HepG2 (cell line): ENCODE measurements at regions of chr2 and their contacts with region 1.

Region 1: DNA sequence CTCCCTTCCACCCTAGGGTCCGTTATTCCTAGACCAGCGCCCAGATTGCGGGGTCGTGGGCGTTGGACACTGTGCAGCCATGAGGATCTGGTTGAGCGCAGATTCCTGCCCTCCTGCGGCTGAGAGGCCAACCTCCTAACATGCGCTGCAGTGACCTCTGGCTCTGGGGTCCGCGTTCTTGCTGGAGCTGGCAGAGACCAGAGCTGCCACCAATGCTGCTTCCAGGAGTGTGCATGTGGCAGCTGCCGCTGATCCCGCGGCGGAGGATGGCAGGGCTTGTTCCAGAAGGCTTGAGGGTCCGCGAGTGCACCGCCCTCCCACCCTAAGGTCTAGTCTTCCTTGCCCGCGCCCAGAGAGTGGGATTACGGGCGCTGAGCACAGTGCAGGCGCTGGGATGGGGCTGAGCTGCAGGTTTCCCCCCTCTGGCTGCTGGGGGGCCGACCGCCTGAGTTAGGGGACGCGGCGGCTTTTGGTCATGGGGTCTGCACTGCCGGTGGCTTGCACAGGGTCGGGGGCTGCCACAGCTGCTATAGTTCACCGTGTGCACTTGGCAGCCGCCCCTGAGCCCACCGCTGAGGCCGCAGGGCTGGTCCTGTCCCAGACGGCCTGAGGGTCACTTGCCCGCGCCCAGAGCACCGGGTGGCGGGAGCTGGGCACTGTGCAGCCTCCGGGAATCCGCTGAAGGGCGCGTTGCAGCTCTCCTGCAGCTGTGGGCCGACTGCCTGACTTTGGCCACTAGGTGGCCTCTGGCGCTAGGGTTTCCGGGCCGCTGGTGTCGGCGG is 145.9 kb downstream of the CCDC74A start:
- DNase-seq: peak; percentile 71
- ATAC-seq: peak; percentile 96
- H3K4me3 ChIP-seq: peak overlapping the region; percentile 53 to 72 (median 56)
- H3K27ac ChIP-seq: no peak overlapping the region
- H3K4me1 ChIP-seq: peaks cover 20% of the 10 kb centered on the region
- H3K27me3 ChIP-seq: peaks cover 0 to 8% of the 10 kb centered on the region in 2 experiments; a peak in 2 of 5 replicates
- CTCF ChIP-seq: peak; percentile 98
- EP300 ChIP-seq: 0 out of 4 replicates have a peak, but pooled peaks of 1 of the 2 experiments have one; percentile 27
- POLR2A ChIP-seq: no peak
- RAD21 ChIP-seq: peak; percentile 95

Region 2: GRCh38 chr2:131154071-131154531 is 519.5 kb before region 1 on chr2:
- CTCF ChIA-PET with region 1: interaction called, 6 read pairs
- POLR2A ChIA-PET with region 1: interaction called, 4 read pairs
- in situ Hi-C with region 1: loop called (anchors 25 kb)
- intact Hi-C with region 1: loop called (anchors 1 kb)
- DNase-seq: peak; percentile 70
- ATAC-seq: peak; percentile 85
- H3K4me3 ChIP-seq: no peak overlapping the region
- H3K27ac ChIP-seq: no peak overlapping the region
- H3K4me1 ChIP-seq: peaks cover 33% of the 10 kb centered on the region
- H3K27me3 ChIP-seq: peaks cover 0 to 26% of the 10 kb centered on the region in 2 experiments; a peak in 3 of 5 replicates
- CTCF ChIP-seq: peak; percentile 99
- EP300 ChIP-seq: no peak
- POLR2A ChIP-seq: no peak
- RAD21 ChIP-seq: peak; percentile 96

Region 3: DNA sequence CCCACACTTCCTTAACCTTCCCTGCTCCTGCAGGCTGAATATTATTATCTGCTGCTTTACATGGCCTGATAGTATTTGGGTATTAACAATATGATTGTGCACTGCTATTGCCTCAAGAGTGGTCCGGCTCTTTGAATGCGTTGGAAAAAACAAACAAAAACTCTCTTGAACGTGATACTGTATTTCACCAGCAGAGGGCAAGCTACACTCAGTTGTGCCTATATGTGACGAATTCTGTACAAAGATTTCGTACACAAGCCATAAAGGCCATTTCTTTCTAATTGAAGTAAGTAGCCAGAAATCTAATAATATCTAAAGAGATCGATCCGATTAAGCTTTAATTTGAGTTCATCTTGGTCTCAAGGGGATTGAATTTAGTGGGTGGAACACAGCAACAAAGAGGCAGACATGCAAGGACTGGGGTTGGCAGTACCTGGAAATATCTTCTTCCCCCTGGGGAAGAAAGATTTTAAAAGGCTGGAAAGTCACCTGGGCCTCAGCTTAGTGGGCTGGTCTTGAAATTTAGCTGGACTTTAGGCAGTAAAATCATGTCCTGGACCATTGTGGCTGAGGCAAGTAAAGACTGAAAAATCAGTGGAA is 260.3 kb before region 1 on chr2:
- CTCF ChIA-PET with region 1: interaction called, 8 read pairs
- POLR2A ChIA-PET with region 1: no interaction called
- in situ Hi-C with region 1: loop called (anchors 25 kb)
- intact Hi-C with region 1: loop called (anchors 1 kb)
- DNase-seq: peak; percentile 61
- ATAC-seq: peak; percentile 92
- H3K4me3 ChIP-seq: no peak overlapping the region
- H3K27ac ChIP-seq: no peak overlapping the region
- H3K4me1 ChIP-seq: 0 out of 2 replicates have a peak, but pooled peaks cover 8% of the 10 kb centered on the region
- H3K27me3 ChIP-seq: peaks cover 0 to 28% of the 10 kb centered on the region in 2 experiments; a peak in 3 of 5 replicates
- CTCF ChIP-seq: peak; percentile 86
- EP300 ChIP-seq: no peak
- POLR2A ChIP-seq: no peak
- RAD21 ChIP-seq: peak; percentile 76

Region 4: GRCh38 chr2:131754929-131755720 is 81.5 kb after region 1 on chr2:
- CTCF ChIA-PET with region 1: no interaction called
- POLR2A ChIA-PET with region 1: no interaction called
- in situ Hi-C with region 1: no loop called
- intact Hi-C with region 1: no loop called
- DNase-seq: no peak
- ATAC-seq: peak; percentile 29; the same call in 1 of the 3 replicates
- H3K4me3 ChIP-seq: no peak overlapping the region
- H3K27ac ChIP-seq: no peak overlapping the region
- H3K4me1 ChIP-seq: no peaks in the 10 kb centered on the region
- H3K27me3 ChIP-seq: no peaks in the 10 kb centered on the region
- CTCF ChIP-seq: no peak
- EP300 ChIP-seq: no peak
- POLR2A ChIP-seq: no peak
- RAD21 ChIP-seq: no peak

Region 5: GRCh38 chr2:131801210-131801744 is 127.7 kb after region 1 on chr2:
- CTCF ChIA-PET with region 1: interaction called, 23 read pairs
- POLR2A ChIA-PET with region 1: no interaction called
- in situ Hi-C with region 1: no loop called
- intact Hi-C with region 1: loop called (anchors 2 kb)
- DNase-seq: no peak
- ATAC-seq: peak; percentile 27
- H3K4me3 ChIP-seq: no peak overlapping the region; a peak in 1 of 6 replicates
- H3K27ac ChIP-seq: no peak overlapping the region
- H3K4me1 ChIP-seq: peaks cover 6% of the 10 kb centered on the region; the same call in 1 of the 2 replicates
- H3K27me3 ChIP-seq: no peaks in the 10 kb centered on the region; a peak in 1 of 5 replicates
- CTCF ChIP-seq: no peak
- EP300 ChIP-seq: no peak
- POLR2A ChIP-seq: no peak
- RAD21 ChIP-seq: no peak